PC-9 (cell line): ENCODE measurements at regions of chr5 and their contacts with region 1.

Region 1: DNA sequence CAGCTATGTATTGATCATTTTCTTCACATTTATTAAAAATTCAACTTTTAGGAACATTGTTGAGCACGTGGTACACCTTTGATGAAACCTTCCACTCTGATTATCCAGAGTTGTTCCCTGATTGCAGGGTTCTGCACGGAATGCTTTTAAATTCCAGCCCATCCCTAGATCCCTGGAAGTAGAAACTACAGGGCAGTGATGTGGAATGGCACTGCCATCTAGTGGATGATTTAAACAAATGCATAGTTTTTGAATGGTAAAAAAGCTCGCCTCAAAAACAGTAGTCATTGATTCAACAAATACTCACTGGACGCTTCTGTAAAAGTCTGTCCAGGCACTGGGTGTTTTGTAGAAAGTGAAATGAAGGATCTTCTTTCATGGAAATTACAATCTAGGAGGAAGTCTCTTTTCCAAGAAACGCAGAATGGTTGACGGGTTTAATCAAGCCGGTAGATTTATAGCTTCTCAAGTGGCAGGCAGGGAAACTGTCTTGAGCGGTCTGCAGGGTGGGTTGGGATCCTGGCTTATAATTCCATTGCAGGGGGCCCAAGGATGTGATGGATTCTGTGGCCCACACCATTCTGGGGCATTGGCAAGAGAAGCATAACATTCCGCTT is 118.4 kb downstream of the ARHGAP26 start:
- DNase-seq: peak; percentile 28 to 50
- H3K4me3 ChIP-seq: no peak overlapping the region
- H3K27ac ChIP-seq: no peak overlapping the region
- H3K4me1 ChIP-seq: peaks cover 28% of the 10 kb centered on the region
- H3K27me3 ChIP-seq: no peaks in the 10 kb centered on the region
- CTCF ChIP-seq: peak; percentile 83

Region 2: DNA sequence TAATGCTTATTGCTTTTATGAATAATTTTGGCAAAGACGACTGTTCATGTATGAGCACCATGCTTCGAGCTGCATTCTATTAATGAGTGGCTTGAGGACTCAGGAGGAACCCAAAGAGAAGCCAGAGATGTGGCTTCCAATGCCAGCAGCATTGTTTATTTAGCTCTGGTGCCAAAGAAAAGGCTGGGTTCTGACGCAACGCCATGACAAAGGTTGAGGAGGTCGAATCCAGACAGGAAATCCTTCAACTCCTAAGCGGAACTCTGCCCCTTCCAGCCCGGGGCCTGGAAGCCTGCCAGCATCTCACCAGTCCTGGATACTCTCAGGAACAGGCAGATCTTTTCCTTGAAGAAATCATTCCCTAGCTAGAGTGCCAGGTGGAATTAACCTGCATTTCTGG is 14.0 kb before region 1 on chr5:
- CTCF ChIA-PET with region 1: interaction called, 10 read pairs
- POLR2A ChIA-PET with region 1: no interaction called
- intact Hi-C with region 1: no loop called
- DNase-seq: peak; percentile 68 to 76
- H3K4me3 ChIP-seq: no peak overlapping the region
- H3K27ac ChIP-seq: peak overlapping the region; percentile 78
- H3K4me1 ChIP-seq: peaks cover 48% of the 10 kb centered on the region
- H3K27me3 ChIP-seq: no peaks in the 10 kb centered on the region
- CTCF ChIP-seq: no peak

Region 3: GRCh38 chr5:144191998-144192397 is 1303.4 kb after region 1 on chr5:
- CTCF ChIA-PET with region 1: no interaction called
- POLR2A ChIA-PET with region 1: no interaction called
- intact Hi-C with region 1: loop called (anchors 10 kb)
- DNase-seq: peak in 1 of 2 experiments; percentile 56
- H3K4me3 ChIP-seq: peak overlapping the region; percentile 21; the same call in 1 of the 2 replicates
- H3K27ac ChIP-seq: no peak overlapping the region
- H3K4me1 ChIP-seq: peaks cover 20% of the 10 kb centered on the region
- H3K27me3 ChIP-seq: no peaks in the 10 kb centered on the region
- CTCF ChIP-seq: peak; percentile 49; the same call in 1 of the 2 replicates